Activated B cell treated with CpG ODN at 0.5 μM for 24 hours (primary cell): ENCODE measurements at regions of chr9 and their contacts with region 1.

Region 1: DNA sequence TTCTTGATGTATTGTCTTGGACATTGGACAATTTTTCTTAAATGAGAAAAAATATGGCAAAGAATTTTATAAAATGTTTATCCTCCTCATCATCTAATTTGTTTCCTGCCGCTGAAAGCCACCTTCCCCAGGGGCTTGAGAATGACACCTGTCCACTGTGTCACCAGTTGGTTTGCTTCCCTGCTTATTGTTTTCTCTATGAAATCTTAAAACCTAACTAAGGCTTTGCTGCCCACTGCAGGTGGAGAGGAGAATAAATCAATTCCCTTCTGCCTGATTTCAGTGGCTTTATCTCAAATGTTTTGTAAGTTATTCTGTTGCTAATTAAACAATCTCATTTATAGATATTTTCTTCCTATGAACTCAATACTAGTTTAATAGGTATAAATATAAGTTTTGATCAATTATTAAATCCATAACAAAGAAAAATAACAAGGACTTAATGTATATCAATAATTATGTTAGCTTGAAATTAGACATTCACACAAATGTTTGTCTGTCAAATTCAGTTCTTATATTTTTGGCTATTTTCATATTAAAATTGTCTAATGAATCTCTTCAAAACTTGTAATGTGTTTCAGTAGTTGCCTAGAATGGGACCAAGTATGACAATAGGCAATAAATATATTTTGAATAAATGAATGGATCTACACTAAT is 822.5 kb downstream of the PTPRD start:
- DNase-seq: no peak
- ATAC-seq: no peak
- H3K4me3 Mint-ChIP-seq: no peak overlapping the region
- H3K27ac Mint-ChIP-seq: no peak overlapping the region
- H3K4me1 Mint-ChIP-seq: peaks cover 3% of the 10 kb centered on the region
- H3K27me3 Mint-ChIP-seq: no peaks in the 10 kb centered on the region
- CTCF ChIP-seq: no peak

Region 2: DNA sequence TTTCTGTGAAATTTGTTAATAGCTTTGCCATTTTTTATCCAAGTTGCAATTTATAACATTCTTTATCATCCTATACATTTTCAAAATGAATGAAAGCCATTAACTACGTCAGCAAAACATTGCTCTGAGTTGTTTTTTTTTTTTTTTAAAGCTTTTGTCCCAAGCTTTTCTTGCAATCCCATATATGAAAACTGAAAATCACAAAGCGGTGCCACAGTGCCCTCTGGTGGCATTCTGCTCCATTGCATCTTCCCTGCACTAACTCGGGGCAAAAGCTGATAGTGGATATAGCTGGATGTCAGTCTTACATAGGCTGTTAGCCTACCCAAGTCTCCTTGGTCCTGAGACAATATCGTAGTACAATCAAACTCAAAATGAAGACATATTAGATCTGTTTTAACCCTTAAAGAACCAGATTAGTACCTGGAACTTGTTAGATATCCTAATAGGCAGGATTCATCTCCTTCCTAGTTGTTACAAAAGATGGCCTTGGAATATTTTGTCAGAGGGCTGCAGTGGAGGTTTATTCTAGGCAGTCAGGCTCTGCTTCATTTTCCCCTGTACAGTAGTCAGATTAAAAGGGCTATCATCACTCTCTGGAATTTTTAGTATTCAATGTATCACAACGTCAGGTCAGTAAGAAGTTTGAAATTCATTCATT is 152.6 kb after region 1 on chr9:
- CTCF ChIA-PET with region 1: interaction called, 4 read pairs
- POLR2A ChIA-PET with region 1: no interaction called
- intact Hi-C with region 1: loop called (anchors 5 kb)
- DNase-seq: peak; percentile 28
- ATAC-seq: peak; percentile 57
- H3K4me3 Mint-ChIP-seq: no peak overlapping the region
- H3K27ac Mint-ChIP-seq: no peak overlapping the region
- H3K4me1 Mint-ChIP-seq: no peaks in the 10 kb centered on the region
- H3K27me3 Mint-ChIP-seq: no peaks in the 10 kb centered on the region
- CTCF ChIP-seq: peak; percentile 99